ENCODE measurements at regions of chr3 and their contacts with region 1.

Region 1: DNA sequence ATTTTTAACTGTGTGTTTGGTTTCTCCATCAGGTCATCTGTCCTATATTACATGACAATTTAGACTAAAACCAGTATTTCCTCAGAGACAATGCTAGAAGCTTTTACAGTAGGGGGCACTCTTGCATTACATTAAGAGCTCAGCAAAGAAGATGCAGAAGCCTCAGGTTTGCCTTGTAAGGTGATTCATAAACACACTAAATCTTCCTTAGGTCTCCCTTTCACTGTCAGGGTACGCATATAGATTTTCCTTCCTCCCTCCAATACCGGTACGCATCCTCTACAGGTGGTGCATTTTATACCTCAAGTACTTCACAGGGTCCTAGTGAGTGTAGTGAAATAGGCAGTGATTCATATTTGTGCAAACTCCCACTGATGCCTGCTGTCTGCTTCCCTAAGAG is 46.5 kb downstream of the CD86 start:
- DNase-seq: peak; percentile 92
- ATAC-seq: peak; percentile 66
- H3K4me3 ChIP-seq: peak overlapping the region; percentile 17; the same call in 1 of the 2 replicates
- H3K27ac ChIP-seq: peak overlapping the region; percentile 76
- H3K4me1 ChIP-seq: peaks cover 71% of the 10 kb centered on the region
- H3K27me3 ChIP-seq: no peaks in the 10 kb centered on the region
- CTCF ChIP-seq: peak; percentile 57 to 88 (median 70)
- EP300 ChIP-seq: no peak
- POLR2A ChIP-seq: no peak
- RAD21 ChIP-seq: peak; percentile 97

Region 2: DNA sequence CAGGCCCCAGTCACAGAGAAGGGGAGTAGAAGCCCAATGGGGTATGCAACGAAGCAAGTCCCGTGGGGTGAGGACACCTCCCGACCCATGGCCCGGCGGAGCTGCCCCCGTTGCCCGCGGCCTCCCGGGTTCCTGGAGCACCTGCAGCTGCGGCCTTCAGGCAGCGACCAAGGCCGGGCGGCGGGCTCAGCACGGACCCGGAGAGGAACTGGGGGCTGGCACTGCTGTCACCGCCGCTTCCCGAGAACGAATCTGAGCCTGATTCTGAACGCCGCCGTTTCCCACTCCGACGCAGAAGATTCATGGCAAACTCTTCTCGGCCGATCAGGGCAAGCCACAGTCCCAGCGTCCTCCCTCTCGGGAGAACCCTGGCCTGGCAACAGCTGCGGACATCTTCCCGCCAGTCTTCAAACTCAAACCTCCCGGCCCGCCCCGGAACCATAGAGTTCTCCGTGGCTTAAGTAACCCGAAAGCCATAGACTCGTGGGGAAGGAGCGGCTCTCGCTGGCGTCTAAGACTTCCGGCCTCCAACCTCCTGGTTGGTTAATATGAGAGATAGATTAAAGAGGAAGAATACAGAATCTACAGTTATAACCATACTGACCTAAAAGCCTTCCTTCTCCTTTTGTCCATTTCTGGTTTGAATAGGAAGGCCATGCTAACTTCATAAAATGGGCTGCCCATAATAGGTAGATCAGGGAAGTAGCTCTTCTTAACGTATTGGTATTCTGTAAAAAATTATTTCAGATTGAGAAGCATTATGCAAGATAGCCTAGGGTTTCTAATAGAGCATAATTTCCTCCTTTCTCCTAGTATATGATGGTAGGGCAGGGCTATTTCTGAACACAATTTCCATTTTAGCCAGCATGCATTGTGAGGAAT is 555.8 kb before region 1 on chr3 and contains the start of gene POLQ:
- CTCF ChIA-PET with region 1: interaction called, 27 read pairs
- POLR2A ChIA-PET with region 1: interaction called, 7 read pairs
- RAD21 ChIA-PET with region 1: interaction called, 66 read pairs
- SMC1A ChIA-PET with region 1: interaction called, 30 read pairs
- in situ Hi-C with region 1: loop called (anchors 5 kb)
- intact Hi-C with region 1: loop called (anchors 1 kb)
- DNase-seq: peak; percentile 77
- ATAC-seq: peak; percentile 82
- H3K4me3 ChIP-seq: peak within 1 kb of the TSS; percentile 76
- H3K27ac ChIP-seq: peak within 1 kb of the TSS; percentile 84
- H3K4me1 ChIP-seq: peaks cover 16% of the 10 kb centered on the region
- H3K27me3 ChIP-seq: no peaks in the 10 kb centered on the region
- CTCF ChIP-seq: no peak
- EP300 ChIP-seq: 0 out of 4 replicates have a peak, but pooled peaks of 1 of the 2 experiments have one; percentile 18
- POLR2A ChIP-seq: peak; percentile 83
- RAD21 ChIP-seq: no peak
- polyA plus RNA-seq, gene POLQ: 3.3 to 3.4 TPM

Region 3: DNA sequence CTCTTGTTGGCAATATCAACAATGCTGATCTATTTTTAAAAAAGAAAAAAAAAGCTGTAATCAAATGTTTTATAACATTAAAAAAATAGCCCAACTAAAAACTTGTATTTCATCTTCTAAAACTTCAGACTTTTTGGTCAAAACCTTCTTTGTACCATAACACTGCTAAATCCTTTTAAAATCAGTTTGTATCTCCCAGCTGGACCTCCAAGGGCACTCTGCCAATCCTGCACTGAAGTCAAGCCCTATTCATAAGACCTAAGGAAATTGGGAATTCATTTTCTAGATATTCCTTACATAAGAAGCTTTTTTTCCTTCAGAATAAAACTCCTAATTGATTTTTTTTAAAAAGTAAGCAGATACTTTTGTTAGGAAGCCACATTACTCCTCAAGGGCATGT is 402.7 kb before region 1 on chr3:
- CTCF ChIA-PET with region 1: no interaction called
- POLR2A ChIA-PET with region 1: no interaction called
- RAD21 ChIA-PET with region 1: no interaction called
- SMC1A ChIA-PET with region 1: no interaction called
- in situ Hi-C with region 1: no loop called
- intact Hi-C with region 1: no loop called
- DNase-seq: no peak
- ATAC-seq: no peak
- H3K4me3 ChIP-seq: no peak overlapping the region
- H3K27ac ChIP-seq: no peak overlapping the region
- H3K4me1 ChIP-seq: no peaks in the 10 kb centered on the region
- H3K27me3 ChIP-seq: no peaks in the 10 kb centered on the region
- CTCF ChIP-seq: no peak
- EP300 ChIP-seq: no peak
- POLR2A ChIP-seq: no peak
- RAD21 ChIP-seq: no peak

Region 4: GRCh38 chr3:122014741-122015140 is 86.9 kb before region 1 on chr3:
- CTCF ChIA-PET with region 1: interaction called, 6 read pairs
- POLR2A ChIA-PET with region 1: interaction called, 31 read pairs
- RAD21 ChIA-PET with region 1: interaction called, 44 read pairs
- SMC1A ChIA-PET with region 1: interaction called, 882 read pairs
- in situ Hi-C with region 1: no loop called
- intact Hi-C with region 1: loop called (anchors 5 kb)
- DNase-seq: peak; percentile 91
- ATAC-seq: peak; percentile 80
- H3K4me3 ChIP-seq: peak overlapping the region; percentile 18; the same call in 1 of the 2 replicates
- H3K27ac ChIP-seq: peak overlapping the region; percentile 60
- H3K4me1 ChIP-seq: peaks cover 72% of the 10 kb centered on the region
- H3K27me3 ChIP-seq: no peaks in the 10 kb centered on the region
- CTCF ChIP-seq: no peak
- EP300 ChIP-seq: peak; percentile 81 to 86; a peak in 3 of 4 replicates
- POLR2A ChIP-seq: no peak
- RAD21 ChIP-seq: no peak

Region 5: DNA sequence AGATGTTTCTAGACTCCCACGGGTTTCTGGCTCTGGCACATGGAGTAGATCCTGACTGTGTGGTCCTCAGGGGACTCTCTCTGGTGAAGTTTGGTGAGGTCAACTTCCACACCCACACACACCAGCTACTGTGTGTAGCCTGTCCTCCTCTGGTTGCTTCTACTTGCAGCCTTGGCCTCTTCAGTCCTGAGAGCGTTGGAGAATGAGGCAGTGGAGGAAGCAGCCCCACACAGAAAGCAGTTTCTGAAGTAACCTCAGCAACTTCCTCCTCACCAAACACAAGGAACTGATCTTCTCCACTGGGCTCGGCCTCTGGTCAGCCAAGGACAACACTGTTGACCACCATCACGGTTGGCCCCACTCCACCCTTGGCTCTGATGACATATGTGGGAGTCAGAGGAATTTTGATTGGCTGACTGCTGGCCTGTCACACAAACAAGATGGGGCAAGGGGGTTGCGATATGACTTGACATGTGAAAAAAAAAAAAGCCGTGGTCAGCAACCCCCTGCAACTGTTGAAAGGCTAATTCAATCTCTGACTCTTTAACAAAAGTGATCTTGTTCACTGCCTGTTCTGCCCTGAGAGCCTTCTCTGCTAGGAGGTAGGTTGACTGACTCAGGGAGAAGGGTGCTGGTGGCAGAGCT is 26.9 kb before region 1 on chr3:
- CTCF ChIA-PET with region 1: interaction called, 114 read pairs
- POLR2A ChIA-PET with region 1: interaction called, 165 read pairs
- RAD21 ChIA-PET with region 1: interaction called, 426 read pairs
- SMC1A ChIA-PET with region 1: interaction called, 604 read pairs
- in situ Hi-C with region 1: no loop called
- intact Hi-C with region 1: loop called (anchors 2 kb)
- DNase-seq: peak; percentile 92
- ATAC-seq: peak; percentile 70
- H3K4me3 ChIP-seq: peak overlapping the region; percentile 72
- H3K27ac ChIP-seq: peak overlapping the region; percentile 97
- H3K4me1 ChIP-seq: peaks cover 45% of the 10 kb centered on the region
- H3K27me3 ChIP-seq: no peaks in the 10 kb centered on the region
- CTCF ChIP-seq: no peak
- EP300 ChIP-seq: peak; percentile 65 to 76
- POLR2A ChIP-seq: peak; percentile 73
- RAD21 ChIP-seq: no peak

Region 6: GRCh38 chr3:122258757-122259371 is 157.2 kb after region 1 on chr3:
- CTCF ChIA-PET with region 1: interaction called, 237 read pairs
- POLR2A ChIA-PET with region 1: interaction called, 178 read pairs
- RAD21 ChIA-PET with region 1: interaction called, 441 read pairs
- SMC1A ChIA-PET with region 1: interaction called, 590 read pairs
- in situ Hi-C with region 1: loop called (anchors 5 kb)
- intact Hi-C with region 1: loop called (anchors 1 kb)
- DNase-seq: peak; percentile 83
- ATAC-seq: peak; percentile 86
- H3K4me3 ChIP-seq: no peak overlapping the region
- H3K27ac ChIP-seq: peak overlapping the region; percentile 5; the same call in 1 of the 2 replicates
- H3K4me1 ChIP-seq: peaks cover 5% of the 10 kb centered on the region; the same call in 1 of the 2 replicates
- H3K27me3 ChIP-seq: no peaks in the 10 kb centered on the region
- CTCF ChIP-seq: peak; percentile 75 to 91 (median 88)
- EP300 ChIP-seq: peak; percentile 19 to 58; a peak in 1 of 4 replicates
- POLR2A ChIP-seq: no peak
- RAD21 ChIP-seq: peak; percentile 97

Region 7: DNA sequence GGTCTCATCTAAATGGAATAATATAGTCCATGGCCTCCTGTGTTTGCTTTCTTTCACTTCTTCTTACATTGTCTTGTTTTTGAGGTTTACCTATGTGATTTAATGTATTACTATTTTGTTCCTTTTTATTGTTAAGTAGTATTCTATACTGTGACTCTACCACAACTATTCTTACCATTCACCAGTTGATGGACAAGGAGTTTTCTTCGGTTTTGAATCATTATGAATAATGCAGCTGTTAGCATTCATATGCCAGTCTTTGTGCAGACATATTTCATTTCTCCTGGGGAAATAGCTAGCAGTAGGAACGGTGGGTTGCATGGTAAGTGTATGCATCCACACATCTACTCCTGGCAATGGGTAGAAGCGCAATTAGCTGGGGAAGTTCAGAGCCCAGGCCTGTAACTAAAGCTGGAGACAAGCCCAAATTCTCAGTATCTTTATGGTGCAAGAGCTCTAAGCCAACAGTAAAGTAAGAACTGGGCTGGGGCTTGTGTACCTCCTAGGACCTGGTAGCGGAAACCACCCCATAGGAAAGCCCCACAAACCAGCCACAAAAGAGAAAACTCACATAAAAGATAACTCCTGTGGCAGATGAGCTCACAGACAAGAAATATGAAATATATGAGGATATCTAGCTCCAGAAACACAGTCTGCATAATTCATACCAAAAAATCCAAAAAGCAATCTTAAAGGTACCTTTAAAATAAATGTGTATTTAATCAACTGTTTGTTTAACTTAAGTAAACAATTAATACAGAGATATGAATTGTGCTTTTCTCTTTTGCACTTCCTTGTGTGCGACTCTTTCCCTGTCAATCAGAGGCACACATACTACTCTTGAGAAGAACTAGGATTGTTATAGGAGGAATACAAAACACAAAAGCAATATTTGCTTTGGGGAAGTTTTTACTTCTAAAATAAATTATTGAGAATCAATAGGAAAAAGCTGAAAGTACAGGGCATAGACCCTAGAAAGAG is 220.7 kb after region 1 on chr3:
- CTCF ChIA-PET with region 1: interaction called, 5 read pairs
- POLR2A ChIA-PET with region 1: interaction called, 3 read pairs
- RAD21 ChIA-PET with region 1: interaction called, 14 read pairs
- SMC1A ChIA-PET with region 1: interaction called, 16 read pairs
- in situ Hi-C with region 1: no loop called
- intact Hi-C with region 1: no loop called
- DNase-seq: no peak
- ATAC-seq: peak; percentile 92
- H3K4me3 ChIP-seq: no peak overlapping the region
- H3K27ac ChIP-seq: peak overlapping the region; percentile 84
- H3K4me1 ChIP-seq: peaks cover 37% of the 10 kb centered on the region
- H3K27me3 ChIP-seq: no peaks in the 10 kb centered on the region
- CTCF ChIP-seq: no peak
- EP300 ChIP-seq: no peak; a peak in 1 of 4 replicates
- POLR2A ChIP-seq: no peak
- RAD21 ChIP-seq: no peak